IMR-90 (cell line): ENCODE measurements at regions of chr22 and their contacts with region 1.

Region 1: DNA sequence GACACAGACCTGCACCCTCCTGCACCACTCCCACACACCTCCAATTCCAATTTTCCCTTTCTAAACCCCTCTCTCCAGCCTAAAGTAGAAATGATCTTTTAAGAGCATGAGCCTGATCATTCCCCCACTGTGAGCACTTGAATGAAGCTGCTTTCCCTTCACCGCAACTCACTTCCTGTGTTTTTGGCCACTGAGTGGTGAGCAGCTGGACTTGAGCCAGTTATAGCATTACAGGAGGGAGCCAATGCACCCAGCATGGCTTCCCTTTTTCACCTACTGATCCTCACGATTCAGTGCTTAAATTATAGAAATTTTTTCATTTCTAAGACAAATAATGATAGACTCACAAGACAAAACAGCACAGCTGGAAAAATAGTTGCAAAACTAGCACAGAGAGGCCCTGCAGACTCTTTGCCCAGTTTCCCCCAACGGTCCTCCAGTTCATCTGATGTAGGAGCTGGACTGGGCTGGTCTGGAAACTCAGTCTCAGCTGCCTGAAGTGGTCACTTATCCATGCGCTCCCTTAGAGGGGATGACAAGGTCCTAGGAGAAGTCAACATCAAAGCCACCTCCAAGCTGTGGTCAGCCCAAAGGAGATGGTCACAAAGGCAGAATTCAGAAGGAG is 9.7 kb upstream of the APOL4 start:
- DNase-seq: peak; percentile 56
- ATAC-seq: no peak; the same call in 1 of the 2 replicates
- H3K4me3 ChIP-seq: no peak overlapping the region
- H3K27ac ChIP-seq: no peak overlapping the region
- H3K4me1 ChIP-seq: no peaks in the 10 kb centered on the region
- H3K27me3 ChIP-seq: peaks cover 41% of the 10 kb centered on the region
- CTCF ChIP-seq: no peak
- POLR2A ChIP-seq: no peak
- RAD21 ChIP-seq: no peak

Region 2: GRCh38 chr22:35995772-35996171 is 215.6 kb before region 1 on chr22:
- CTCF ChIA-PET with region 1: no interaction called
- POLR2A ChIA-PET with region 1: no interaction called
- dilution Hi-C with region 1: no loop called
- in situ Hi-C with region 1: no loop called
- intact Hi-C with region 1: no loop called
- DNase-seq: peak; percentile 99
- ATAC-seq: peak; percentile 77
- H3K4me3 ChIP-seq: peak overlapping the region; percentile 2; the same call in 1 of the 2 replicates
- H3K27ac ChIP-seq: peak overlapping the region; percentile 93
- H3K4me1 ChIP-seq: peaks cover 23% of the 10 kb centered on the region
- H3K27me3 ChIP-seq: no peaks in the 10 kb centered on the region
- CTCF ChIP-seq: no peak
- POLR2A ChIP-seq: no peak
- RAD21 ChIP-seq: peak; percentile 31

Region 3: DNA sequence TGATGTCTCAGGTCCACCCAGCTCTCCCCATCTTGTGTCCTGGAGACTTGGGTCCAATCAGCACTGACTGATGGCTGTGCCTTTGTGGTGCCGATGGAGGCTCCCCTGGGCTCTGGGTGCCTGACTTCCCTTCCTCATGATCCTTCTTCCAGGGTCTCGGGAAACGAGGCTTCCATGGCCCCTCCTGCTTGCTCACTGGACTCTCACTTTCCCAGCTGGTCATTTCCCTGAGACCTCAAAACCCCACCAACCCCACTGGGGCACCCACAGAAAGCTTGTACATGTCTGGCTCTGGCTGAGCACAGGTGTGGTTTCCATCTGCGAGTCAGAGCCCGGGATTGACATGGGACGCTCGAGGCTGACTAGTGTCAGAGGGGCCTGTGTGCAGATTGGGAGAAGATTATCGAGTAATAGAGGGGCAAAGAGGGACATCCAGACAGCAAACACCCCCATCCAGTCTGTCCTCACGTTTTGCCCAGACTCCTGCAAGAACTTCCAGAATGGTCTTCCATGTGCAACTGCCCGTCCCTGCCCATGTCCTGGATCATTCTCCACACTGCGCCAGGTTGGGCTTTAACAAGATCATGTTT is 56.6 kb after region 1 on chr22:
- CTCF ChIA-PET with region 1: no interaction called
- POLR2A ChIA-PET with region 1: interaction called, 10 read pairs
- dilution Hi-C with region 1: no loop called
- in situ Hi-C with region 1: no loop called
- intact Hi-C with region 1: no loop called
- DNase-seq: no peak
- ATAC-seq: no peak
- H3K4me3 ChIP-seq: no peak overlapping the region
- H3K27ac ChIP-seq: no peak overlapping the region
- H3K4me1 ChIP-seq: no peaks in the 10 kb centered on the region
- H3K27me3 ChIP-seq: no peaks in the 10 kb centered on the region
- CTCF ChIP-seq: no peak
- POLR2A ChIP-seq: 0 out of 2 replicates have a peak, but pooled peaks have one; percentile 18
- RAD21 ChIP-seq: no peak